ENCODE measurements at regions of chr14 and their contacts with region 1.

Region 1: DNA sequence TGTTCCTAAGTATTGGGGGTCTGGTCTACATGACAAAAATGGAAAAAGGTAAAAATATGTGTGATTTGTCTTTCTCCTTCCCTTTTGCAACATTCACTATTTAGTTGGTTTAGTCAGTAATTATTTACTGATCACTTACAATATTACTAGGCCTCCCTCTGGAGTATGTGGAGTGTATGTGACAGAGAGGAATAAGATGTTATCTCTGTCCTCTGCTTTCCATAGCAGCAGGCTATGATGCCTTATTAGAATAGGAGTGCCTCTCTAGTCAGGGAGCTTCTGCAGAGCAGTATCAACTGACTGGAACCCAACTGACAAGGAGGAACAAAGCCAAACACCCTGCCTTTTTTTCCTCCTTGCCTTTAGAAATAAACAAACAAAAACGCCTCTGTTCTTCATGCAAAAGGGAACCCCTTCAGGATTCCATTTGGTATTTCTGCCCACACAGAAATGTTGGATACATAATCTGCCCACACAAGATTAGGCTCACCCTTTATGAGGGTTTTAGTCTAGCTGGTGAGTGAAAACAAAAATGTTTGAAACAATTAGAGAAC is 50.2 kb downstream of the VRK1 start:
- DNase-seq: no peak
- H3K4me3 ChIP-seq: no peak overlapping the region
- H3K27ac ChIP-seq: no peak overlapping the region
- H3K4me1 ChIP-seq: peaks cover 5% of the 10 kb centered on the region
- H3K27me3 ChIP-seq: no peaks in the 10 kb centered on the region
- CTCF ChIP-seq: no peak

Region 2: DNA sequence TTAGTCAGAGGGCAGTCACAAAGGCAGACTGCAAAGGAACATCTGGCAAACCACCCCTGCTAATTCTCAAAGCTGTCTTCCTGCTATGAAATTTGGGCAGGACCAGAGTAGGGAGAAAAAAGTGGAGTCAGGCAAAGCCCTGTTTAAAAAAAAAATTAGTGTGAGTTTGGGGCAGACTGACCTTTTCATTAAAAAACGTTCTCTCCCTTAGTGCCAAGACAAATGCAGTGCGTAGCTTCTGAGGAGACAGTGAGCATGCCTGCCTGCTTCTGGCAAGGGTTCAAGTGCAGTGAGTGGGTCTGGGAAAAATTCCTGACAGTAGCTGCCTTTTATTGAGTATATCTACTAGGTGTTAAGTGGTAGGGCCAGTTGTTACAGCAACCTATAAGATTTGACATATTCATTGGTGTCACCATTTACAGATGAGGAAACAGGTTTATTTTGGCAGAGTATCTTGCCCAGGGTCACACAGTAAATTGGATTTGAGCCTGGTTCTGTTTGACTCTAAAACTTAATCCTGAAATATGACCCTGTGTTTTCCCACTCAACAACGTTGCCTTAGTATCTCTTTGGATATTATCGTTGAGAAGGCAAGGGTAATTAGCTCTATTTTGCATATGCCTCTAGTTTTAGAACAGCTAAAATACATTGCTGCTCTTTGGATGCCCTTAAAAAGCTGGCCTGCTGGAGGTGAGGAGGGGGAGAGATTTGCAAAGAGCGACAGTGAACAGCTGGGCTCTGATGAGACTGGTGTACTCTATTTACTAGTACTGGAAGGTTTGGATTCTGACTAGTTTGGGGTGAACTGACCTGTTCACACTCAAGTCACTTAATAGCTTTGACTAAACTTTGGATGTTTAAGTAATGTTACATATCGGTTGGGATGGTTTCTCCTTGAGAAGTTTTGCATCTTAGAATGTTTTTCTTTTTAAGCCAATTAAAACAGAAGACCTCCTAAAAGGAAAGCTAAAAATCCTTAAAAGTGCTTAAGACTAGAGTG is 272.4 kb before region 1 on chr14:
- CTCF ChIA-PET with region 1: no interaction called
- dilution Hi-C with region 1: no loop called
- in situ Hi-C with region 1: no loop called
- intact Hi-C with region 1: loop called (anchors 5 kb)
- DNase-seq: peak; percentile 51
- H3K4me3 ChIP-seq: no peak overlapping the region
- H3K27ac ChIP-seq: peak overlapping the region; percentile 23
- H3K4me1 ChIP-seq: peaks cover 15% of the 10 kb centered on the region
- H3K27me3 ChIP-seq: no peaks in the 10 kb centered on the region
- CTCF ChIP-seq: no peak

Region 3: DNA sequence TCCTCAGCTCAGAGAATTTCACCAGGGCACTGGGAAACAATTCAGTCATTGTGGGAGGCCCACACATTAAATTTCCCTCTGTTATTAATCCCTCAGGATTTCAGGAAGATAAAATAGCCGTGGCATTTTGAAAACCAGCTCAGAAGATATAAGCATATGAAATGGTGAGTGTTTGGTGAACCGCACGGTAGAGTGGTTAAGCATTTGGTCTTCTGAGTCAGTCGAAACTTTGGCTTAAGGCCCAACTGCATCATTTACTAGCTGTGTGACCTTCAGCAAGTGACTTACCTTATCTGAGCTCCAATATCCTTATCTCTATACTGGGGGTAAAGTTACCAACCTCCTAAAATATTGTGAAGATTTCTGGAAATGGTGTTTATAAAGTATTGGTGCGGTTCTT is 55.4 kb before region 1 on chr14:
- CTCF ChIA-PET with region 1: no interaction called
- dilution Hi-C with region 1: no loop called
- in situ Hi-C with region 1: no loop called
- intact Hi-C with region 1: no loop called
- DNase-seq: peak; percentile 25
- H3K4me3 ChIP-seq: no peak overlapping the region
- H3K27ac ChIP-seq: no peak overlapping the region
- H3K4me1 ChIP-seq: no peaks in the 10 kb centered on the region
- H3K27me3 ChIP-seq: no peaks in the 10 kb centered on the region
- CTCF ChIP-seq: no peak

Measured in mammary epithelial cell (primary cell).